ENCODE measurements at regions of chr3 and their contacts with region 1.

Region 1: GRCh38 chr3:32684800-32685542 is at the start of gene CNOT10:
- DNase-seq: peak; percentile 91 to 98 (median 94)
- ATAC-seq: peak; percentile 87
- H3K4me3 ChIP-seq: peak within 1 kb of the TSS; percentile 92
- H3K4me3 Mint-ChIP-seq: peak within 1 kb of the TSS; percentile 87
- H3K27ac ChIP-seq: peak within 1 kb of the TSS; percentile 74 to 82
- H3K27ac Mint-ChIP-seq: peak within 1 kb of the TSS; percentile 97
- H3K4me1 ChIP-seq: peaks cover 15% of the 10 kb centered on the region
- H3K4me1 Mint-ChIP-seq: peaks cover 41% of the 10 kb centered on the region
- H3K27me3 ChIP-seq: no peaks in the 10 kb centered on the region
- H3K27me3 Mint-ChIP-seq: no peaks in the 10 kb centered on the region
- CTCF ChIP-seq: no peak
- total RNA-seq, gene CNOT10: 31.3 to 42.0 TPM

Region 2: DNA sequence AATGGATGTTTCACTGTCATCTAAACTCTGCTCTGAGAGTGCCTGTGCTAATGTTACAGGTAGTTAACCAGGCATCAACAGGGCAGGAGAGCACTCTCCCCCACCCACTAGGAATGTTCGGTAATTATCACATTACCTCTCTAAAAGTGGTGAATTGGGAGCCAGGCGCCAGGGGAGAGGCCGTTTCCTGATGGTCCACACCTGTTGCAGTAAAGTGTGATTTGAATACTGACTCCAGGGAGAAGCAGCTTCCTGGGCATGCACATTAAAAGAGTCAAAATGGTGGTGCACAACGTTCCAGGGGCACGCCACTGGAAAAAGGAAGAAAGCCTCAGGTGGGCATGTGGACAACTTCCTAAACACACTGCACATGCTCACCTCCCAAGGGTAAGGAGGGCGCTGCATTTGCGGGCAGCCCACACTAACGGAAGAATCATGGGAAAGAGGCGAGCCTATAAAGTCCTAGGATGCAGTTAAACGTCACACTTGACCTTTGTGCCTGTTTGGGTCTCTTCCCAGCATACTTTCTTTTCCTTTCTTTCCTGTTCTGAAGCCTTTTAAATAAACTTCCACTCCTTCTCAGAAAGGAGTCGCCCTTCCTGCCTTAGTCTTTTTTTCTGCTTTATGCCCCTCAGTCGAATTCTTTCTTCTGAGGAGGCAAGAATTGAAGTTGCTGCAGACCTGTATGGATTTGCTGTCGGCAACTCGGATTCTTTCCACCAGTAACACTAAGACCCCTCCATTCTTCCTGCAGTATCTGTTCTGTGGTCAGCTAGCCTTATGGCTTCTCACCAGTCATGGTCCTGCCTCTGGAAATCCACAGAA is 607.5 kb before region 1 on chr3:
- CTCF ChIA-PET with region 1: no interaction called
- POLR2A ChIA-PET with region 1: no interaction called
- intact Hi-C with region 1: no loop called
- DNase-seq: no peak
- ATAC-seq: no peak
- H3K4me3 ChIP-seq: no peak overlapping the region
- H3K4me3 Mint-ChIP-seq: no peak overlapping the region
- H3K27ac ChIP-seq: no peak overlapping the region
- H3K27ac Mint-ChIP-seq: no peak overlapping the region
- H3K4me1 ChIP-seq: no peaks in the 10 kb centered on the region
- H3K4me1 Mint-ChIP-seq: no peaks in the 10 kb centered on the region
- H3K27me3 ChIP-seq: no peaks in the 10 kb centered on the region
- H3K27me3 Mint-ChIP-seq: no peaks in the 10 kb centered on the region
- CTCF ChIP-seq: no peak

Region 3: GRCh38 chr3:32106280-32106928 is 578.6 kb before region 1 on chr3 and contains the start of gene GPD1L:
- CTCF ChIA-PET with region 1: no interaction called
- POLR2A ChIA-PET with region 1: no interaction called
- intact Hi-C with region 1: loop called in 1 of 2 experiments (anchors 5 kb)
- DNase-seq: peak; percentile 76 to 96 (median 90)
- ATAC-seq: peak; percentile 97
- H3K4me3 ChIP-seq: peak within 1 kb of the TSS; percentile 80
- H3K4me3 Mint-ChIP-seq: peak within 1 kb of the TSS; percentile 97
- H3K27ac ChIP-seq: peak within 1 kb of the TSS; percentile 21 to 29
- H3K27ac Mint-ChIP-seq: peak within 1 kb of the TSS; percentile 66
- H3K4me1 ChIP-seq: peaks cover 39% of the 10 kb centered on the region
- H3K4me1 Mint-ChIP-seq: peaks cover 34% of the 10 kb centered on the region
- H3K27me3 ChIP-seq: no peaks in the 10 kb centered on the region
- H3K27me3 Mint-ChIP-seq: no peaks in the 10 kb centered on the region
- CTCF ChIP-seq: no peak
- total RNA-seq, gene GPD1L: 15.3 to 16.0 TPM

Region 4: DNA sequence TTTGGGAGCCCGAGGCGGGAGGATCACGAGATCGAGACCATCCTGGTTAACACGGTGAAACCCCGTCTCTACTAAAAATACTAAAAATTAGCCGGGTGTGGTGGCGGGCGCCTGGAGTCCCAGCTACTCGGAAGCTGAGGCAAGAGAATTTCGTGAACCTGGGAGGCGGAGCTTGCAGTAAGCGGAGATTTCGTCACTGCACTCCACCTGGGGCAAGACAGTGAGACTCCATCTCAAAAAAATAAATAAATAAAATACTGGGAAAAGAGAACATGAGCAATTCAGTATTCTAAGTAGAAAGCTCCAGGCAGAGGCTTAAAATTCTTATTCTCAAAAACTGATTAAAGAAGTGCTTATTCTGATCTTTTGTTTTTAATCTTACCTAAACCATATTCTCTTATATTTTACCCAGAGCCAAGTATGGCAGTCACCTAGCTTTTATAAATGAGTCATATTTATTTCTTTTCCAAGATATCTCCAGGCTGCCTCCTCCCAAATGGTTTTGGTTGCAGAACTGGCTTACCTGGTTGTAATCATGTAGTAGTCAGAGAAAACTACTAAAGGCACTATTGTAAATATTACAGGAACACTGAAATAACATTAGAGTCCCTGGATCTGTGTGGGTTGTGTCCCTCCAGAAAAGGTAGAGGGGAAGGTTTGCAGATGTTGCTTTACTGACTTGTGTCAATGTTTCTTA is 68.6 kb before region 1 on chr3:
- CTCF ChIA-PET with region 1: no interaction called
- POLR2A ChIA-PET with region 1: no interaction called
- intact Hi-C with region 1: no loop called
- DNase-seq: no peak
- ATAC-seq: no peak
- H3K4me3 ChIP-seq: no peak overlapping the region
- H3K4me3 Mint-ChIP-seq: no peak overlapping the region
- H3K27ac ChIP-seq: no peak overlapping the region
- H3K27ac Mint-ChIP-seq: no peak overlapping the region
- H3K4me1 ChIP-seq: no peaks in the 10 kb centered on the region
- H3K4me1 Mint-ChIP-seq: no peaks in the 10 kb centered on the region
- H3K27me3 ChIP-seq: no peaks in the 10 kb centered on the region
- H3K27me3 Mint-ChIP-seq: peaks cover 16% of the 10 kb centered on the region
- CTCF ChIP-seq: no peak

Region 5: GRCh38 chr3:32712611-32713010 is 27.6 kb after region 1 on chr3:
- CTCF ChIA-PET with region 1: no interaction called
- POLR2A ChIA-PET with region 1: no interaction called
- intact Hi-C with region 1: no loop called
- DNase-seq: no peak
- ATAC-seq: no peak
- H3K4me3 ChIP-seq: no peak overlapping the region
- H3K4me3 Mint-ChIP-seq: no peak overlapping the region
- H3K27ac ChIP-seq: no peak overlapping the region
- H3K27ac Mint-ChIP-seq: no peak overlapping the region
- H3K4me1 ChIP-seq: no peaks in the 10 kb centered on the region
- H3K4me1 Mint-ChIP-seq: no peaks in the 10 kb centered on the region
- H3K27me3 ChIP-seq: no peaks in the 10 kb centered on the region
- H3K27me3 Mint-ChIP-seq: no peaks in the 10 kb centered on the region
- CTCF ChIP-seq: no peak

Region 6: GRCh38 chr3:33096093-33096868 is 411.3 kb after region 1 on chr3:
- CTCF ChIA-PET with region 1: no interaction called
- POLR2A ChIA-PET with region 1: no interaction called
- intact Hi-C with region 1: loop called in 1 of 2 experiments (anchors 10 kb)
- DNase-seq: peak; percentile 29 to 71 (median 36)
- ATAC-seq: peak; percentile 53
- H3K4me3 ChIP-seq: peak overlapping the region; percentile 79
- H3K4me3 Mint-ChIP-seq: peak overlapping the region; percentile 97
- H3K27ac ChIP-seq: peak overlapping the region; percentile 15 to 35
- H3K27ac Mint-ChIP-seq: peak overlapping the region; percentile 83
- H3K4me1 ChIP-seq: peaks cover 46% of the 10 kb centered on the region
- H3K4me1 Mint-ChIP-seq: peaks cover 48% of the 10 kb centered on the region
- H3K27me3 ChIP-seq: no peaks in the 10 kb centered on the region
- H3K27me3 Mint-ChIP-seq: no peaks in the 10 kb centered on the region
- CTCF ChIP-seq: no peak